ENCODE measurements at regions of chr6 and their contacts with region 1.

Region 1: GRCh38 chr6:2245094-2245876 is at the start of gene GMDS:
- DNase-seq: peak; percentile 93
- H3K4me3 ChIP-seq: peak within 1 kb of the TSS; percentile 66 to 93 (median 88)
- H3K27ac ChIP-seq: peak within 1 kb of the TSS; percentile 75 to 87 (median 81)
- H3K4me1 ChIP-seq: peaks cover 0 to 22% (median 11%) of the 10 kb centered on the region in 4 donors
- H3K27me3 ChIP-seq: no peaks in the 10 kb centered on the region
- CTCF ChIP-seq: no peak
- EP300 ChIP-seq: no peak
- POLR2A ChIP-seq: peak in 1 of 2 donors; percentile 56
- total RNA-seq, gene GMDS: 3.1 to 9.4 (median 3.8) TPM

Region 2: DNA sequence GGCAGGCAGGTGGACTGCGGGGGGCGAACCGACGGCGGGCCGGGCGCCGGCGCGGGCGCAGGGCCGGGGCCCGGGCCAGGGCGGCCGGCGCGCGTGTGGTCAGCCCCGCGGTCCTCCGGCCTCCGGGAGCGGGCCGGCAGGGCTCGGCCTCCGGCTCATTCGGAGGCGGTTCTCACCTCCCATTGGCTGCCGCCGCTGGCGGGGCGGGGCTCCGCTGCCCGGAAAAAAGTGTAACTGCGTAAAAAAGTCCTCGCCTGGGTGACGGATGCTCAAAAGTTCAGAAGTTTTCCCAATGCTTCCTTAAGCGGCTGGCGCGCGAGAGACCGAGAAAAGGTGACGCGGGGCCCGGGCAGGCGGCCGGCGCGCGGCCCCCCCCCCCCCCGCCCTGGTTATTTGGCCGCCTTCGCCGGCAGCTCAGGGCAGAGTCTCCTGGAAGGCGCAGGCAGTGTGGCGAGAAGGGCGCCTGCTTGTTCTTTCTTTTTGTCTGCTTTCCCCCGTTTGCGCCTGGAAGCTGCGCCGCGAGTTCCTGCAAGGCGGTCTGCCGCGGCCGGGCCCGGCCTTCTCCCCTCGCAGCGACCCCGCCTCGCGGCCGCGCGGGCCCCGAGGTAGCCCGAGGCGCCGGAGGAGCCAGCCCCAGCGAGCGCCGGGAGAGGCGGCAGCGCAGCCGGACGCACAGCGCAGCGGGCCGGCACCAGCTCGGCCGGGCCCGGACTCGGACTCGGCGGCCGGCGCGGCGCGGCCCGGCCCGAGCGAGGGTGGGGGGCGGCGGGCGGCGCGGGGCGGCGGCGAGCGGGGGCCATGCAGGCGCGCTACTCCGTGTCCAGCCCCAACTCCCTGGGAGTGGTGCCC is 635.4 kb before region 1 on chr6 and contains the start of gene FOXC1:
- intact Hi-C with region 1: loop called (anchors 5 kb)
- DNase-seq: peak; percentile 86
- H3K4me3 ChIP-seq: peak within 1 kb of the TSS; percentile 29 to 62 (median 52)
- H3K27ac ChIP-seq: peak within 1 kb of the TSS; percentile 58 to 97 (median 68)
- H3K4me1 ChIP-seq: peaks cover 0 to 75% (median 51%) of the 10 kb centered on the region in 4 donors
- H3K27me3 ChIP-seq: peaks cover 89 to 92% (median 89%) of the 10 kb centered on the region in 3 donors
- CTCF ChIP-seq: no peak
- EP300 ChIP-seq: no peak
- POLR2A ChIP-seq: no peak
- total RNA-seq, gene FOXC1: 1.5 to 3.0 (median 1.8) TPM

Region 3: GRCh38 chr6:2186516-2186915 is 58.8 kb before region 1 on chr6:
- intact Hi-C with region 1: no loop called
- DNase-seq: no peak
- H3K4me3 ChIP-seq: no peak overlapping the region
- H3K27ac ChIP-seq: no peak overlapping the region
- H3K4me1 ChIP-seq: no peaks in the 10 kb centered on the region
- H3K27me3 ChIP-seq: no peaks in the 10 kb centered on the region
- CTCF ChIP-seq: no peak
- EP300 ChIP-seq: no peak
- POLR2A ChIP-seq: no peak

Region 4: GRCh38 chr6:2378891-2379652 is 133.8 kb after region 1 on chr6:
- intact Hi-C with region 1: loop called (anchors 5 kb)
- DNase-seq: no peak
- H3K4me3 ChIP-seq: no peak overlapping the region
- H3K27ac ChIP-seq: no peak overlapping the region
- H3K4me1 ChIP-seq: peaks cover 0 to 28% (median 20%) of the 10 kb centered on the region in 4 donors
- H3K27me3 ChIP-seq: no peaks in the 10 kb centered on the region
- CTCF ChIP-seq: no peak
- EP300 ChIP-seq: no peak
- POLR2A ChIP-seq: no peak

Region 5: DNA sequence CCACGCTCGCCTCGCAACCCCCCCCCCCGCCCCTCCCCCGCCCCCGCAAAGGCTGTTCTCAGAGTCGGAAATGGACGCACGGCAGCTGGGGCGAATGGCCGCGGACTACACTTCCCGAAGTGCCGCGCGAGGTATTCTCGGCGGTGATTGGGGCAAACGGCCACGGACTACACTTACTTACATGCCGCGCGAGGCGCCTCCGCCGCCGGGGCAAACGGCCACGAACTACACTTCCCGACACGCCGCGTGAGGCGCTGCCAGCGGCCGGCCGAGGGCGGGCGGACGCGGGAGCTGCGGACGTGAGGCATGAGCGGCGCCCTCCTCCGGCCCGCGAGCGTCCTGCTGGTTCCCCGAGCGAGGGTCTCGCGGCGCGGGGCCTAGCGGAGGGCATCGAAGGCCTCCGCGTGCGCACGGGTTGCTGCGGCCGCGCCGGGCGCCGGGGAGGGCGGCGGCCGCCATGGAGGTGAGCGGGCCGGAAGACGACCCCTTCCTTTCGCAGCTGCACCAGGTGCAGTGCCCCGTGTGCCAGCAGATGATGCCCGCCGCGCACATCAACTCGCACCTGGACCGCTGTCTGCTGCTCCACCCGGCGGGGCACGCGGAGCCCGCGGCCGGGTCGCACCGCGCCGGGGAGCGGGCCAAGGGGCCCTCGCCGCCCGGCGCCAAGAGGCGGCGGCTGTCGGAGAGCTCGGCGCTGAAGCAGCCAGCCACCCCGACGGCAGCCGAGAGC is 520.0 kb after region 1 on chr6 and contains the start of gene WRNIP1:
- intact Hi-C with region 1: loop called (anchors 2 kb)
- DNase-seq: peak; percentile 100
- H3K4me3 ChIP-seq: peak within 1 kb of the TSS; percentile 61 to 96 (median 90)
- H3K27ac ChIP-seq: peak within 1 kb of the TSS; percentile 94 to 98 (median 96)
- H3K4me1 ChIP-seq: peaks cover 0 to 48% (median 36%) of the 10 kb centered on the region in 4 donors
- H3K27me3 ChIP-seq: no peaks in the 10 kb centered on the region
- CTCF ChIP-seq: peak in 3 of 4 experiments; percentile 8 to 67 (median 21)
- EP300 ChIP-seq: no peak
- POLR2A ChIP-seq: no peak
- total RNA-seq, gene WRNIP1: 41.0 to 56.6 (median 47.9) TPM

Measured in sigmoid colon (tissue), 7 donors.